PC-3 (cell line): ENCODE measurements at regions of chr7 and their contacts with region 1.

Region 1: DNA sequence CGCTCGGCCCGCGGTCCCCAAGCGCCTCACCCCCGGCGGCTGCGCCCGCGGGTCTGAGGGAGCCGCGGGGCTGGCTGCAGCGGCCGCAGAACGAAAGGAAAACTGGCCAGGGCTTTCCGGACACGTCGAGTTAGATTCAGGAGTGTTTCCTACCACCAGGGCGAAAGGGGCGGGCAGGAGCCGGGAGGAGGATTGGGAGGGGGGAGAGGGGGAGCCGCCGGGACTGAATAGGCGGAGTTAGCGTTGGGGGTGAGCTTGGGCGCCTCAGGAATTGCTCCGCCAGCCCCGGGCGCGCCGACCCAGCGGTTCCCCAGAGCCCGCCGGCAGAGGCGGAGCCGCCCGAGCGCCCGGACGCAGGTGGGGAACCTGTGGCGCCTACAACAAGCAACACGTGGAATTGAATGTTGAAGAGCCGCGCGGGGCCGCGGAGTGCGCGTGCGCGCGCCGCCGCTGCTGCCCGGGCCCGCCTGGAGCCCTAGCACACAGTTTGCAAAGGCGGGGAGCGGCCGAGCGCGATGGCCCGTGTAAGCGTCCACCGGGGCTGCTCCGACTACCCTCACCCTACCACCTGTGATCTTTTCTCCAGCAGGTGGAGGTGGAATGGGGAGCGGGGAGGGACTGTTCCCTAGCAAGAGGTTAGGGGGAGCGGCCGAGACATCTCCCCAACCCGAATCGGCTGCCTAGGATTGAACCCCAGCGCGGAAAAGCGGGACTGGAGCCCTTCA is at the start of gene CADPS2:
- DNase-seq: peak; percentile 71
- ATAC-seq: peak; percentile 66
- H3K4me3 ChIP-seq: peak within 1 kb of the TSS; percentile 79
- H3K27ac ChIP-seq: peak within 1 kb of the TSS; percentile 38
- H3K4me1 ChIP-seq: peaks cover 19% of the 10 kb centered on the region
- H3K27me3 ChIP-seq: peaks cover 14% of the 10 kb centered on the region
- CTCF ChIP-seq: no peak
- total RNA-seq, gene CADPS2: 7.5 and 9.4 TPM in 2 replicates

Region 2: GRCh38 chr7:122561326-122561725 is 325.2 kb before region 1 on chr7:
- CTCF ChIA-PET with region 1: no interaction called
- POLR2A ChIA-PET with region 1: no interaction called
- intact Hi-C with region 1: loop called (anchors 10 kb)
- DNase-seq: no peak
- ATAC-seq: no peak
- H3K4me3 ChIP-seq: no peak overlapping the region
- H3K27ac ChIP-seq: no peak overlapping the region
- H3K4me1 ChIP-seq: no peaks in the 10 kb centered on the region
- H3K27me3 ChIP-seq: no peaks in the 10 kb centered on the region
- CTCF ChIP-seq: no peak

Region 3: DNA sequence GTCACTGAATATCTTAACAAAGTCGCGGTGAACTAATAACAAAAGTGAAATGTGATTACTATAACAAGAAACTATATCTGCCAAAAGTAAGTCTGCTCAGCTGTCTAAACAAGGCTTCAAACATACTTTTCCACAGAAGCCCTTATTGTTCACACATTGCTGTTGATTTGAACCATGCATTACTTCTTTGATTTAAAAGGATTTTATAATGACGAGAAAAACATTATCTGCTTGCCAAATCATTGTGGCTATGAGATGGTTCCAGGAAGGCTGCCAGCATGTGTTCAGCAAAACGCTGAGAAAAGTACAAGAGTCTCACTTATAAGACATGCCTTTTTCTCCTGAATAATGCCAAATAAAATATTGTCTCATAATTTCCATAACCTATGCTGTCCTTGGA is 212.0 kb before region 1 on chr7:
- CTCF ChIA-PET with region 1: no interaction called
- POLR2A ChIA-PET with region 1: no interaction called
- intact Hi-C with region 1: loop called (anchors 10 kb)
- DNase-seq: peak; percentile 41
- ATAC-seq: peak; percentile 49; the same call in 1 of the 2 replicates
- H3K4me3 ChIP-seq: peak overlapping the region; percentile 31; the same call in 1 of the 2 replicates
- H3K27ac ChIP-seq: peak overlapping the region; percentile 23; the same call in 1 of the 2 replicates
- H3K4me1 ChIP-seq: peaks cover 8% of the 10 kb centered on the region; the same call in 1 of the 2 replicates
- H3K27me3 ChIP-seq: no peaks in the 10 kb centered on the region
- CTCF ChIP-seq: no peak

Region 4: DNA sequence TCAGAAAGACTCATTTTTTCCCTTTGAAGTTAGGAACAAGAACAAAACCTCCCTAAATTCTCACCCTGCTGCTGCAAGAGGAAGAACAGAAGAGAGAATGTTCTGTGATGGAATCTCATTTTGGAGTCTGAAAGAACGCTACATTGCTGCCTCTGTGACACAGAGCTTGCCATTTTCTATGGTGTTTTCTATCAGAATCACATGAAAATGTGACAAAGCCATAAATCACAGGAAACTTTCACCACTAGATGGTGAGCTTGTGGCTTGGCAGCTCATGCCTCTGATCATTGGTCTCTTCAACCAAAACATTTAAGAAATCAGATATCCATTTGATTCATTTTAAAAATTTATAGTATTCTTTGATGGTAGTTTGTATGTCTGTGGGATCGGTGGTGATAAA is 83.2 kb before region 1 on chr7:
- CTCF ChIA-PET with region 1: interaction called, 4 read pairs
- POLR2A ChIA-PET with region 1: no interaction called
- intact Hi-C with region 1: loop called (anchors 1 kb)
- DNase-seq: peak; percentile 52
- ATAC-seq: peak; percentile 71
- H3K4me3 ChIP-seq: no peak overlapping the region
- H3K27ac ChIP-seq: no peak overlapping the region
- H3K4me1 ChIP-seq: no peaks in the 10 kb centered on the region
- H3K27me3 ChIP-seq: no peaks in the 10 kb centered on the region
- CTCF ChIP-seq: peak; percentile 61

Region 5: DNA sequence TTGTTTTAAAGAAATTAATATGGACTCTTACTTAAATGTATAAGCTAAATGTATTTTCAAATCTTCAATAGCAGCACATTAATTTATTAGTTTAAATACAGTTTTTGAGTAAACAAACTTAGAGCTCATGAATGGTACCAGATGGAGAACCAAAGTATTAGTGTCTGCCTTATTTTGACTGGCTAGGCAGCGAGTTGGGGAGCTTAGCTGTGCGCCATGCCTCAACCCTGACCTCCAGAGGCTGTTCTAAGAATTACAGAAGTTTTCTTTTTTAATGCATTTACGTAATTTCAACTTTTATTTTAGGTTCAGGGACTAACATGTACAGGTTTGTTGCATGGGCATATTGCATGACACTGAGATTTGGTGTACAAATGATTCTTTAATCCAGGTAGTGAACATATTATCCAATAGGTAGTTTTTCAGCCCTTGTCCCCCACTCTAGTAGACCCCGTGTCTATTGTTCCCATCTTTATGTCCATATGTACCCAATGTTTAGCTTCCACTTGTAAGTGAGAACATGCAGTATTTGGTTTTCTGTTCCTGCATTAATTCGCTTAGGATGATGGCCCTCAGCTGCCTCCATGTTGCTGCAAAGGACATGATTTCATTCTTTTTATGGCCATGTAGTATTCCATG is 481.1 kb after region 1 on chr7:
- CTCF ChIA-PET with region 1: no interaction called
- POLR2A ChIA-PET with region 1: no interaction called
- intact Hi-C with region 1: loop called (anchors 5 kb)
- DNase-seq: peak; percentile 63
- ATAC-seq: peak; percentile 71
- H3K4me3 ChIP-seq: no peak overlapping the region
- H3K27ac ChIP-seq: no peak overlapping the region
- H3K4me1 ChIP-seq: no peaks in the 10 kb centered on the region
- H3K27me3 ChIP-seq: no peaks in the 10 kb centered on the region
- CTCF ChIP-seq: peak; percentile 71